ENCODE measurements at regions of chr12 and their contacts with region 1.

Region 1: DNA sequence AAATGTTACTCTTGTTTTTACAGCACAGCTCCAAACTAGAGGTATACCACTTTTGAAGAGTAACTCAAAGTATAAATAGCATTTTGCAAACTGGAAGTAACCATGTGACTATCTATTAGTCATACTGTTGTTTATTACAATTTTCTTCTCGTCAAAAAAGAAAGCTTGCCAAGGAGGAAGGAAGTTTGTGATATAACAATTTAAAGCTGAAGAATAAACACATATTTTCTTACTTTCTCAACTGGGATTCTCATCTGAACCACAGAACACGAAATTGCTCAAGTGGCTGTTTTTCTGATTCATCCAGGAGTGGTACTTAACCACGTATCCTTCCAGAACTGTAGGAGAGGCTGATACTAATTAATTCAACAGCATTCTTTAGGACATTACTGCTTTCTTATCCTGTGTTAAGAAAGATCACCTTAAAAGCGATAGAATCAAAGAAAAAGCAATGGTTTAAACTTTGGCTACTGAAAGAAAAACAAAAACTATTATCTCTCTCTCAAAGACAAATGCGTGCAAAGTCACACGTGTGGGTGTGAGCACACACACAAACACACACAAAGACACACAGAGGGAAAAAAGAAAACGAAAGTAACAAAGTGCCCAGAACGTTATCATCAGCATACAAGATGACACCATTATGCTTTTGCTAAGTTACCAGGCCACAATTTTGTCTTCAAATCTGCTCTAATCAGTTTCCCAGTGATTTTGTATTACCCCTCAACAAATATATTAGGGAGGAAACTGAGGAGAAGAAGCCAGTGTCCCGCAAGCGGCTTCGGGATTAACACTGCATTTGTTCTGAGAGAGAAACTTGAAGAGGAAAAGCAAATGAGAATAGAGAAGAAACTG is at the start of gene CLEC2B:
- DNase-seq: peak; percentile 58 to 74 (median 62)
- H3K4me3 ChIP-seq: peak within 1 kb of the TSS; percentile 55 to 67
- H3K4me3 Mint-ChIP-seq: peak within 1 kb of the TSS; percentile 89 to 96 (median 92)
- H3K27ac ChIP-seq: peak within 1 kb of the TSS; percentile 83
- H3K27ac Mint-ChIP-seq: peak within 1 kb of the TSS; percentile 94 to 100 (median 96)
- H3K4me1 ChIP-seq: peaks cover 15% of the 10 kb centered on the region
- H3K4me1 Mint-ChIP-seq: peaks cover 9 to 33% (median 19%) of the 10 kb centered on the region in 4 donors
- H3K27me3 ChIP-seq: no peaks in the 10 kb centered on the region
- H3K27me3 Mint-ChIP-seq: no peaks in the 10 kb centered on the region
- total RNA-seq, gene CLEC2B: 72.5 to 74.6 TPM

Region 2: DNA sequence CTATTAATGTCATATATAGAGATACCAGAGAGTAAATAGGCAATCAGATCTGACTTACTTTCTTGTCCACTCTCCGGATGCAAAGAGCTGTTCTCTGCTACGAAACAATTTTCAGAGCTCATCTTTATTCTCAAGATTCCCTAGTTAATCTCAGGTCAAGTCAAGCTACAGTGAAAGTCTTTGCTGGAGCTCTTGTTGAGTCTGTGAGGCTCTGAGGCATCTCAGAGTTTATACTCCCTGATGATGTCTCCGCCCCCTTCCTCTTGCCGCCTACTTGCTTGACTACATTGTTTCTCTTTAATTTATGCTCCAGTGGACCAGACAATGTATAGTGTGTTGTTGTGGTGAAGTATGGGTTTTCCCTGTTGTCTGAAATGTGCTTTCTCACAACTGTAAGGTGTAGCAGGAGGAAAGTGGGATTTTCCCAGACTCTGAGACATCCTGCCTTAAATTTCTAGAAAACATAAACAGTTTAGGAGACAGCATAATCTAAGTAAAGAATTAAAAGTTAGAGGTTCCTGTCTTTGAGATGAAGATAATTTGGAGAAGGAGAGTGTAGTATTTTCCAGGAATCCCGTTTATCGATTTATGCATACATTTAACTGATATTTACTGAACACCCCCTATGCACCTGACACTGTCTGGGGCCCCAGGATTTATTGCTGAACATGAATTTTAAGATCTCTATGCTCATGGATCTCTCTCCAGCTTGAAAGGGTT is 108.7 kb before region 1 on chr12 and contains the start of gene CD69:
- CTCF ChIA-PET with region 1: interaction called, 4 read pairs
- POLR2A ChIA-PET with region 1: interaction called, 63 read pairs
- intact Hi-C with region 1: no loop called
- DNase-seq: peak; percentile 87 to 93 (median 90)
- H3K4me3 ChIP-seq: peak within 1 kb of the TSS; percentile 71 to 80
- H3K4me3 Mint-ChIP-seq: peak within 1 kb of the TSS; percentile 87 to 100 (median 98)
- H3K27ac ChIP-seq: peak within 1 kb of the TSS; percentile 98
- H3K27ac Mint-ChIP-seq: peak within 1 kb of the TSS; percentile 98 to 100 (median 100)
- H3K4me1 ChIP-seq: peaks cover 59% of the 10 kb centered on the region
- H3K4me1 Mint-ChIP-seq: peaks cover 42 to 70% (median 51%) of the 10 kb centered on the region in 4 donors
- H3K27me3 ChIP-seq: no peaks in the 10 kb centered on the region
- H3K27me3 Mint-ChIP-seq: no peaks in the 10 kb centered on the region
- total RNA-seq, gene CD69: 31.0 to 35.9 TPM

Region 3: GRCh38 chr12:9851927-9852326 is 17.6 kb before region 1 on chr12:
- CTCF ChIA-PET with region 1: interaction called, 4 read pairs
- POLR2A ChIA-PET with region 1: interaction called, 10 read pairs
- intact Hi-C with region 1: loop called (anchors 2 kb)
- DNase-seq: no peak
- H3K4me3 ChIP-seq: no peak overlapping the region
- H3K4me3 Mint-ChIP-seq: no peak overlapping the region
- H3K27ac ChIP-seq: no peak overlapping the region
- H3K27ac Mint-ChIP-seq: peak overlapping the region in 1 of 7 donors; percentile 28
- H3K4me1 ChIP-seq: peaks cover 2% of the 10 kb centered on the region
- H3K4me1 Mint-ChIP-seq: peaks cover 4 to 23% (median 7%) of the 10 kb centered on the region in 4 donors
- H3K27me3 ChIP-seq: no peaks in the 10 kb centered on the region
- H3K27me3 Mint-ChIP-seq: peaks cover 0 to 1% of the 10 kb centered on the region in 2 donors

Region 4: GRCh38 chr12:9925708-9926393 is 56.3 kb after region 1 on chr12:
- CTCF ChIA-PET with region 1: interaction called, 3 read pairs
- POLR2A ChIA-PET with region 1: interaction called, 7 read pairs
- intact Hi-C with region 1: loop called (anchors 1 kb)
- DNase-seq: peak in 4 of 5 donors; percentile 46 to 50 (median 48)
- H3K4me3 ChIP-seq: peak overlapping the region in 1 of 2 donors; percentile 17
- H3K4me3 Mint-ChIP-seq: peak overlapping the region in 7 of 8 donors; percentile 51 to 86 (median 78)
- H3K27ac ChIP-seq: no peak overlapping the region
- H3K27ac Mint-ChIP-seq: peak overlapping the region in 1 of 7 donors; percentile 81
- H3K4me1 ChIP-seq: no peaks in the 10 kb centered on the region
- H3K4me1 Mint-ChIP-seq: peaks cover 5 to 10% (median 5%) of the 10 kb centered on the region in 4 donors
- H3K27me3 ChIP-seq: no peaks in the 10 kb centered on the region
- H3K27me3 Mint-ChIP-seq: peaks cover 1 to 6% of the 10 kb centered on the region in 2 donors

Region 5: GRCh38 chr12:10613349-10614055 is 744.0 kb after region 1 on chr12 and contains the start of gene MAGOHB:
- CTCF ChIA-PET with region 1: no interaction called
- POLR2A ChIA-PET with region 1: no interaction called
- intact Hi-C with region 1: loop called (anchors 5 kb)
- DNase-seq: peak; percentile 96 to 98 (median 96)
- H3K4me3 ChIP-seq: peak within 1 kb of the TSS; percentile 92 to 96
- H3K4me3 Mint-ChIP-seq: peak within 1 kb of the TSS; percentile 99 to 100 (median 100)
- H3K27ac ChIP-seq: peak within 1 kb of the TSS; percentile 93
- H3K27ac Mint-ChIP-seq: peak within 1 kb of the TSS; percentile 99 to 100 (median 100)
- H3K4me1 ChIP-seq: peaks cover 22% of the 10 kb centered on the region
- H3K4me1 Mint-ChIP-seq: peaks cover 20 to 36% (median 27%) of the 10 kb centered on the region in 4 donors
- H3K27me3 ChIP-seq: no peaks in the 10 kb centered on the region
- H3K27me3 Mint-ChIP-seq: peaks cover 5 to 10% of the 10 kb centered on the region in 2 donors
- total RNA-seq, gene MAGOHB: 19.3 to 22.0 TPM

Measured in CD4-positive, alpha-beta memory T cell (primary cell).